ENCODE measurements at regions of chr6 and their contacts with region 1.

Region 1: DNA sequence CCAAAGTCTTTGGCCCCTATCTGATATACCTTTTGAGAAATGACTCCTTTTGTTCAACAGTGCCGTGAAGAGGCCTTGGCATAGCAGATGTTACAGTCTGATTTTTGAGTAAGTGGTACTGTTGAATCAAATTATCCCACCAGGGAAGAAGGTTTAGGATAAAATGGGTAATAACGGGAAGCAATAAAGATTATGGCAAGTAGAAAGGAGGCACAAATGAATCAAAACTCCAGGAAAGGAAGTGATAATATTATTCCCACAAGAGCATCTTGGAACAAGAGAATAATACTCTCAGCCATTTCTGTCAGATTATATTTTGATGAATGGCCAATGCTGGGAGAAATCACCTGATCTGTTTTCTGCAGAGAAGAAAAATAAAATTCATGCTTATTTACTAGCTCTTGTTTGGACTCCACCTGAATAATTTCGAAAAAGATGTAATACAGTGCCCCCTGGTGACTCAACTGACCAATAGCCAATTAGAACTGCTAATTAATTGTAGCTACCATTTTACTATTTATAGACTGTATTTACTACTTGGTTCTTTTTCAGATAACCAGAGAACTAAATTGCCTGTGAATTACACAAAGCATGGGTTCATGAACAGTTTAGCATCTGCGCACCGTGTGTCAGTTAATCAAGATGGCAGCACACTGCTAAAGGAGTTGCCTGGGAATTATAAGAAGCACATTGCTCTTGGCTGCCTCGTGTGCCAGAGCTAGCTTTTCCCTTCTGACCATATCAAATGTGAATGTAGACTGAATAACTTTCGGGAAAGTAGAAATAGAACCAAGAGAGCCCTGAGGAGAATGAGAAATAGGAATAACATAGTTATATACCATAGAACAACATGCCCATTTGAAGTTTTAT is 78.5 kb upstream of the TRDN start:
- DNase-seq: peak; percentile 9 to 38
- H3K4me3 ChIP-seq: no peak overlapping the region
- H3K27ac ChIP-seq: no peak overlapping the region
- H3K4me1 ChIP-seq: no peaks in the 10 kb centered on the region
- H3K27me3 ChIP-seq: no peaks in the 10 kb centered on the region
- CTCF ChIP-seq: peak; percentile 84

Region 2: DNA sequence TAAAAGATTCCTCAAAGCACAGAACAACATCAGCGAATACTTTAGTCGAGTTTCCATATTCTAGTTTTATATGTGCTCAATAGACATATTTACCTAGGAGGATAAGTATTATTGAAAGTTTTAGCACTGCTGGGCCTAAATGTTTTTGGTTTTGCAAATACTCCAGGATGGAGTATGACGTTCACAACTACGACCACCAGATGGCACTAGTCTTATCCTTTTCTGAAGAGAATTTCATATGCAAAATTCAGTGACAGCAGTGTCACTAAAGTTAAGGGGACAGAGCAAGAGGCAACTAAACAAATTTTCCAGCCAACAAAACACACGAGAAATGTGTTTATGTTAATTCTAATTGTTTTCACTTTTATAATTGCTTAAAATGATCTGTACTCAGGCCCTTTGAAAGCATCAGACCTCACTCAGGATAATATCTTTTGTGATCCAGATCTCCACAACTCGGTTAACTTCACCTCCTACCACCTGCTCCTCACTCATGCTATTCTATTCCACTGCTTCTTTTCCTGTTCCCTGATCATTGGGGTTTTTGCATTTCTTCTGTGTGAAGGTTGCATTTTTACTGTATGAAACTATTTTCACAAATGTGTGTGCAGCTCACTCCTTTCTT is 299.3 kb before region 1 on chr6:
- CTCF ChIA-PET with region 1: interaction called, 9 read pairs
- POLR2A ChIA-PET with region 1: no interaction called
- intact Hi-C with region 1: loop called (anchors 1 kb)
- DNase-seq: peak; percentile 44 to 61
- H3K4me3 ChIP-seq: no peak overlapping the region
- H3K27ac ChIP-seq: no peak overlapping the region
- H3K4me1 ChIP-seq: no peaks in the 10 kb centered on the region
- H3K27me3 ChIP-seq: no peaks in the 10 kb centered on the region
- CTCF ChIP-seq: peak; percentile 92